ENCODE measurements at regions of chrX and their contacts with region 1.

Region 1: DNA sequence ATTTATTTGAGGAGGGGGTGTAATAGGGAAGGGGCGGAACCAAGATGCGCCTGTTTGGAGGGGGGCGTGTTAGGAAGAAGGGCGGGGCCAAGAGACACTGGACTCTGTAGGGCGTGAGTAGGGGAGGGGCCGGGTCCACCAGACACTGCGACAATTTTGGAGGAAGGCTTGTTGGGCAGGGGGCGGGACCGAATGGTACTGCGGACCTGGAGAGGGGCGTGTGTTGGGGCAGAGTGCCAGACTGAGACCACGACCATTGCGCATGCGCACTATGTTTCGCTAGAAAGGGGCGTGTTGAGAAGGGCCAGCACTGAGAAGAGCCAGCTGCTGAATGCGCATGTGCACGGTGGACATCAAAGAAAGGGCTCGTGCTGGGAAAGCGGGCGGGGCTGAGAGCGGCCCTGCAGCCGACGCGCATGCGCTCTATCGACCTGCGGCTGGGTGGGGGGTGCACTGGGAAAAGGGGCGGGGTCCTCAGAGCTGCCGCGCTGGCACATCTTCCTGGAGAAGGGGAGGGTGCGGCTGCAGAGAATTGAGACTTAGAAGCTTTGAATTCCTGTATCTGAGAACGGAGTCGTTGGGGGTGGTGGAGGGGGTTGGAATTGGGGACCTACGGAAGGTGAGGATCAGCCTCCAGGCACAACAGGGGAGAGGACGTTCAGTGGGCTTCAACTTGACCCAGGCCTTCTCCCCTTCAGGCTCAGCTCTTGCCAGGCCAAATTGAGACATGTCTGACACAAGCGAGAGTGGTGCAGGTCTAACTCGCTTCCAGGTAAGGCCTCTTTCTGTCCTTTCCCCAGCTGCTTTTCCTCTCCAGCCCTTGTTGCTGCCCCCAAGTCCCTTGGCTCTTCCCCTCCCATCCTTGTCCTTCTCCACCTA is 1.3 kb downstream of the MAGED2 start:
- DNase-seq: peak; percentile 73 to 96 (median 85)
- ATAC-seq: peak; percentile 71
- H3K4me3 ChIP-seq: peak overlapping the region; percentile 92 to 96
- H3K4me3 Mint-ChIP-seq: peak overlapping the region; percentile 93
- H3K27ac ChIP-seq: peak overlapping the region; percentile 92
- H3K27ac Mint-ChIP-seq: peak overlapping the region; percentile 95
- H3K4me1 ChIP-seq: peaks cover 13% of the 10 kb centered on the region
- H3K4me1 Mint-ChIP-seq: peaks cover 21% of the 10 kb centered on the region
- H3K27me3 ChIP-seq: no peaks in the 10 kb centered on the region
- H3K27me3 Mint-ChIP-seq: no peaks in the 10 kb centered on the region
- CTCF ChIP-seq: no peak

Region 2: GRCh38 chrX:53422086-53422860 is 1386.6 kb before region 1 on chrX and contains the start of gene SMC1A:
- CTCF ChIA-PET with region 1: no interaction called
- POLR2A ChIA-PET with region 1: no interaction called
- intact Hi-C with region 1: loop called in 1 of 2 experiments (anchors 5 kb)
- DNase-seq: peak; percentile 86 to 98 (median 96)
- ATAC-seq: peak; percentile 89
- H3K4me3 ChIP-seq: peak within 1 kb of the TSS; percentile 92 to 94
- H3K4me3 Mint-ChIP-seq: peak within 1 kb of the TSS; percentile 94
- H3K27ac ChIP-seq: peak within 1 kb of the TSS; percentile 95 to 99
- H3K27ac Mint-ChIP-seq: peak within 1 kb of the TSS; percentile 95
- H3K4me1 ChIP-seq: peaks cover 18% of the 10 kb centered on the region
- H3K4me1 Mint-ChIP-seq: peaks cover 33% of the 10 kb centered on the region
- H3K27me3 ChIP-seq: no peaks in the 10 kb centered on the region
- H3K27me3 Mint-ChIP-seq: no peaks in the 10 kb centered on the region
- CTCF ChIP-seq: no peak
- total RNA-seq, gene SMC1A: 23.7 to 25.3 TPM

Region 3: GRCh38 chrX:54044126-54044876 is 764.5 kb before region 1 on chrX and contains the start of gene PHF8:
- CTCF ChIA-PET with region 1: no interaction called
- POLR2A ChIA-PET with region 1: no interaction called
- intact Hi-C with region 1: loop called (anchors 5 kb)
- DNase-seq: peak; percentile 87 to 96 (median 95)
- ATAC-seq: peak; percentile 82
- H3K4me3 ChIP-seq: peak within 1 kb of the TSS; percentile 75 to 86
- H3K4me3 Mint-ChIP-seq: peak within 1 kb of the TSS; percentile 94
- H3K27ac ChIP-seq: peak within 1 kb of the TSS; percentile 85 to 95
- H3K27ac Mint-ChIP-seq: peak within 1 kb of the TSS; percentile 97
- H3K4me1 ChIP-seq: peaks cover 11% of the 10 kb centered on the region
- H3K4me1 Mint-ChIP-seq: peaks cover 29% of the 10 kb centered on the region
- H3K27me3 ChIP-seq: no peaks in the 10 kb centered on the region
- H3K27me3 Mint-ChIP-seq: no peaks in the 10 kb centered on the region
- CTCF ChIP-seq: no peak
- total RNA-seq, gene PHF8: 41.8 to 43.7 TPM

Region 4: DNA sequence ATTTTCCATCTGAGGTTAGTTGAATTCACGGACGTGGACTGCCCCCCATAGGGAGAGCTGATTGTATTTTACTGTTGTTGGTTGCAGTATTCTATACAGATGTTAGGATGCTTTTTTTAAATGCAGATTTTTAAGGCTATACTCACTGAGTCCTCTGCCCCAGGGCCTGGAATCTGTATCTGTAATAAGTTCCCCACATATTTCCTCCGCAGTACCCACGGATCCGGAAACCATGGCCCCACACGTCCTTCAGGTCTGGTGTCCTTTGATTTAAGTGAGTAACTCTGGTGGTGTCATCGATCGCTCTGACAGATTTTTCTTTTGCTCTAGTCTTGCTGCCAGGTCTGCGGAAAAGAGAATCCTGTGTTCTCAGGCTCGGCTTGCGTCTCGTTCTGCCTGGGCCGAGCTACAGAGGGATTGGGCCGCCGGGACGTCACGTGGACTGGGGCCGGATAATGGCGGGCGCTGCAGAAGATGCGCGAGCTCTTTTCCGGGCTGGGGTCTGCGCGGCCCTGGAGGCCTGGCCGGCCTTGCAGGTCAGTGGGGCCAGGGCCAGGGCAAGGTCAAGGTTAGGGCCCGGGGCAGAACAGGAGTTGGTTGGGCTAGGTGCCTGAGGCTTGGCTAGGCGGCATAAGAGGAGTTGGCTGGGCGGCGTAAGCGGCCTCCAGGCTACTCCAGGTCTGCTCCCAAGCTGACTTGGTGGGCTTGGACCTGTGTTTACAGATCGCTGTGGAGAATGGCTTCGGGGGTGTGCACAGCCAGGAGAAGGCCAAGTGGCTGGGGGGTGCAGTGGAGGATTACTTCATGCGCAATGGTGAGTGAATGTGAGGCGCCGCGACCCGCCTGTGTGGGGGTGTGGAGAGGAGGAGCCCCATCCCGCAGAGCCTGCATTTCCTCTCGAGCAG is 368.6 kb before region 1 on chrX and contains the start of gene TSR2:
- CTCF ChIA-PET with region 1: no interaction called
- POLR2A ChIA-PET with region 1: no interaction called
- intact Hi-C with region 1: loop called (anchors 2 kb)
- DNase-seq: peak; percentile 55 to 90 (median 78)
- ATAC-seq: peak; percentile 93
- H3K4me3 ChIP-seq: peak within 1 kb of the TSS; percentile 93 to 96
- H3K4me3 Mint-ChIP-seq: peak within 1 kb of the TSS; percentile 92
- H3K27ac ChIP-seq: peak within 1 kb of the TSS; percentile 66 to 73
- H3K27ac Mint-ChIP-seq: peak within 1 kb of the TSS; percentile 91
- H3K4me1 ChIP-seq: peaks cover 21% of the 10 kb centered on the region
- H3K4me1 Mint-ChIP-seq: peaks cover 31% of the 10 kb centered on the region
- H3K27me3 ChIP-seq: no peaks in the 10 kb centered on the region
- H3K27me3 Mint-ChIP-seq: no peaks in the 10 kb centered on the region
- CTCF ChIP-seq: no peak
- total RNA-seq, gene TSR2: 38.7 to 41.4 TPM

Region 5: DNA sequence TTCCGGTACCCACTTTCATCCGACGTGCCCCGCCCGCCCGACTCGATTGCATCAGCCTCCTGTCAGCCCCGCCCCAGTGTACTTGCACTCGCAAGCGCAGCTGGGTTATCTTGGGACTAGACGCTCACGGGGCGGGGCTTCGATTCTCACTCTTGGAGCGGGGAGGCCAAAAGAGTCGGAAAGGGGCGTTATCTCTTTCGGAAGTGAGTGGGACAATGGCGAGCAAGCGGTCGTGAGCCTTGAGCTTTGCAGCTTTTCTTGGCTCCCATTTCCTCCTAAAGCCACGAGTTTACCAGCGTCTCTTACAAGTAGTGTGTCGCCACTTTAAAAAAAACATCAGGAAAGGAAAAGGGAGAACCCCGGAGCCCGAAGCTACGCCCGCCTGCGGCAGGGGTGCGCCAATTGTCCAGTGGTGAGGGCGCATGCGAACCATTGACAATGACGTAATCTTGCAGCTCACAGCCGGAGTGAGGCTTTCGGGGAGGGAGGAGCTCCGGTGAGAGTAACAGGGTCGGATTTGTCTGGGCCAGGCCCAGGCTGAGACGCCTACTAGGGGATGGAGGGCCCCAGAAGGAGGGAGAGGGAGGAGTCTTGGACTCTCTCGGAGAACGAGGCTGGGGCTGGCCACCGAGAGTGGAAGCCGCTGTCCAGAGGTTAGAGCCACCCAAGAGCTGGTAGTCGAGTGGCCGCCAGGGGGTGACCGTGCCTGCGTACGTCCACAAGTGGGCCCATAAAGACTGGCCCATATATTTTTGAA is 169.3 kb before region 1 on chrX:
- CTCF ChIA-PET with region 1: interaction called, 4 read pairs
- POLR2A ChIA-PET with region 1: interaction called, 8 read pairs
- intact Hi-C with region 1: loop called (anchors 1 to 2 kb)
- DNase-seq: peak; percentile 80 to 97 (median 92)
- ATAC-seq: peak; percentile 88
- H3K4me3 ChIP-seq: peak overlapping the region; percentile 60 to 94
- H3K4me3 Mint-ChIP-seq: peak overlapping the region; percentile 97
- H3K27ac ChIP-seq: peak overlapping the region; percentile 97 to 99
- H3K27ac Mint-ChIP-seq: peak overlapping the region; percentile 99
- H3K4me1 ChIP-seq: peaks cover 6% of the 10 kb centered on the region
- H3K4me1 Mint-ChIP-seq: peaks cover 9% of the 10 kb centered on the region
- H3K27me3 ChIP-seq: no peaks in the 10 kb centered on the region
- H3K27me3 Mint-ChIP-seq: no peaks in the 10 kb centered on the region
- CTCF ChIP-seq: peak; percentile 22

Measured in CD8-positive, alpha-beta T cell (primary cell).